ENCODE measurements at regions of chr17 and their contacts with region 1.

Region 1: DNA sequence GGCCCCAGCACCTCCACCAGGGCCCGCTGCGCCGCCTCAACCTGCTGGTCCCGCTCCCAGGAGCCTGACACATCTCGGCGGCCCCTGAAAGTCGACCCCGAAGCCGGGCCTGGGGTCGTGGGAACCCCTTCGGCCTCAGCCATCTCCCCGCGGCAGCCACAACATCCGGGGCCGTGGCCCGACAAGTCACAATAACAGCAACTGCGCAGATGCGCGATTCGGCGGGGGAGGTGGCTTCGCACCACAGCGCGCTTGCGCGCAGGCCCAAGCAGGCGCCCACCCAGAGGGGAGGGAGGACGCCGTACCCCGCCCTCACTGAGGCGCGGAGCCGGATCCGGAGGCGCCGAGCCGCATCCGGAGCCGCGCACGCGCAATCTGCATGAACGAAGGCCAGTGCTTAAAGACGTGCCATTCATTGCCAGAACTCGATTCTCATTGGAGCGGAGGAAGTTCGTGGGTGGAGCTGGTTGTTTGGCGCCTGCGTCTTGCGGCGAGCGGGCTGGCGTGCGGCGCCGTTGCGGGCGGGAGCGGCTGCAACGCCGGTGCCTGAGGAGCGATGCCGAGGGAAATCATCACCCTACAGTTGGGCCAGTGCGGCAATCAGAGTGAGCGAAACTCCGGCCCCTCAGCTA is at the starts of genes RETREG3 and TUBG1:
- DNase-seq: peak; percentile 98
- ATAC-seq: peak; percentile 91
- H3K4me3 ChIP-seq: peak within 1 kb of the TSS; percentile 85 to 94
- H3K27ac ChIP-seq: peak within 1 kb of the TSS; percentile 82
- H3K4me1 ChIP-seq: peaks cover 0 to 12% of the 10 kb centered on the region in 2 experiments; a peak in 3 of 4 replicates
- H3K27me3 ChIP-seq: no peaks in the 10 kb centered on the region
- CTCF ChIP-seq: no peak
- POLR2A ChIP-seq: peak; percentile 76
- RAD21 ChIP-seq: no peak
- total RNA-seq, gene RETREG3: 38.5 TPM
- total RNA-seq, gene TUBG1: 139 TPM

Region 2: GRCh38 chr17:42677008-42677857 is 67.9 kb after region 1 on chr17:
- CTCF ChIA-PET with region 1: interaction called, 17 read pairs
- POLR2A ChIA-PET with region 1: interaction called, 16 read pairs
- RAD21 ChIA-PET with region 1: interaction called in 1 of 2 experiments, 6 read pairs
- intact Hi-C with region 1: loop called (anchors 2 kb)
- DNase-seq: peak; percentile 99
- ATAC-seq: peak; percentile 71
- H3K4me3 ChIP-seq: peak overlapping the region; percentile 95 to 98
- H3K27ac ChIP-seq: peak overlapping the region; percentile 96
- H3K4me1 ChIP-seq: peaks cover 37 to 72% of the 10 kb centered on the region in 2 experiments
- H3K27me3 ChIP-seq: no peaks in the 10 kb centered on the region
- CTCF ChIP-seq: no peak
- POLR2A ChIP-seq: no peak
- RAD21 ChIP-seq: no peak

Region 3: GRCh38 chr17:43068570-43069367 is 459.5 kb after region 1 on chr17:
- CTCF ChIA-PET with region 1: no interaction called
- POLR2A ChIA-PET with region 1: no interaction called
- RAD21 ChIA-PET with region 1: no interaction called
- intact Hi-C with region 1: no loop called
- DNase-seq: no peak
- ATAC-seq: no peak
- H3K4me3 ChIP-seq: no peak overlapping the region
- H3K27ac ChIP-seq: no peak overlapping the region
- H3K4me1 ChIP-seq: no peaks in the 10 kb centered on the region
- H3K27me3 ChIP-seq: no peaks in the 10 kb centered on the region
- CTCF ChIP-seq: no peak
- POLR2A ChIP-seq: no peak
- RAD21 ChIP-seq: no peak